Caco-2 (cell line): ENCODE measurements at regions of chr15 and their contacts with region 1.

Region 1: GRCh38 chr15:84658080-84658787 is at the start of gene NMB:
- DNase-seq: peak; percentile 89 to 92
- H3K4me3 ChIP-seq: peak within 1 kb of the TSS; percentile 60
- H3K4me3 Mint-ChIP-seq: peak within 1 kb of the TSS; percentile 77
- H3K27ac Mint-ChIP-seq: peak within 1 kb of the TSS; percentile 35
- H3K4me1 ChIP-seq: peaks cover 10% of the 10 kb centered on the region; the same call in 1 of the 2 replicates
- H3K4me1 Mint-ChIP-seq: peaks cover 6% of the 10 kb centered on the region
- H3K27me3 ChIP-seq: no peaks in the 10 kb centered on the region
- H3K27me3 Mint-ChIP-seq: no peaks in the 10 kb centered on the region
- CTCF ChIP-seq: peak; percentile 80 to 94
- total RNA-seq, gene NMB: 7.5 and 8.6 TPM in 2 replicates

Region 2: DNA sequence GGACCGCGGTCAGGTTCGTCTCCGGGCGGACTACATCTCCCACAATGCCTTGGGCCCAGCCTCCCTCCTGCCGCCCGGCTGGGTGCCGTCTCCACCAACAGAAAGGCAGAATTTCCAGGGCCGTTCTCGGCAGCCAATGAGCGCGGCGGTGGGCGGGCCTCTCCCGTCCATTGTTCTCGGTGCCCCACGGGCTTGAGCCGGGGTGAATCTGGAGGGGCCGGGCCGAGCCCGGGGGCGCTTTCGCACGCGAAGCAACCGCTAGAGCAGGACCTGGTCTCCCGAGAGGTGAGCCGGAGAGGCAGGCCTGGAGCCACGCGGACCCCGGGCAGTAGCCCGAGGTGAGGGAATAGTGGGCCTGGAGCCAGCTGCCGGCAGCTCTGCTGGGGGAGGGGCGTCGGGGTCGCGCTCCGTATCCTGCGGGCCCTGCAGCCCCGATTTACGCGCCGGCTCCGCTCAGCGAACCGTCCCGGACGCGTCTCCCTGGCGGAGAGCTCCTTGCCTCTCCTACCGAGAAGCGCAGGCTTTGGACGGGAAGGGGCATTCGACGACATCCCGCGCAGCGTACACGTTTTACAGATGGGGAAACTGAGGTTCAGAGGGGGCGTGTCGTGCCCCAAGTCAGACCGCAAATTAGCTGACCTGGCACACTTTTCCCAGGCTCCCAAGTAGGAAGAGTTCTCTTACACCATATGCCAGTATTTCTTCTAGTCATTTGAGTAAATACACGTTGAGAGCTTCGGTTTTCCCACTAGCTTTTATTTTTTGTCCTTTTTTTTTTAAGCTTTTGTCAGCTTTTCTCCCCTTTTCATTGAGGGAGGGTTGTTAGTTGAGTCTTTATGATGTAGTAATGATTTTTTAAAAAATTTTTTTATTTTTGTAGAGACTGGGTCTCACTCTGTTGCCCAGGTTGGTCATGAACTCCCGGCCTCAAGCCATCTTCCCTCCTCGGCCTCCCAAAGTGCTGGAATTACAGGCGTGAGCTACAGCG is 57.1 kb before region 1 on chr15 and contains the start of gene ZSCAN2:
- CTCF ChIA-PET with region 1: interaction called, 18 read pairs
- POLR2A ChIA-PET with region 1: no interaction called
- intact Hi-C with region 1: loop called (anchors 1 kb)
- DNase-seq: peak; percentile 95 to 97
- H3K4me3 ChIP-seq: peak within 1 kb of the TSS; percentile 67
- H3K4me3 Mint-ChIP-seq: peak within 1 kb of the TSS; percentile 96
- H3K27ac Mint-ChIP-seq: peak within 1 kb of the TSS; percentile 86
- H3K4me1 ChIP-seq: peaks cover 12% of the 10 kb centered on the region
- H3K4me1 Mint-ChIP-seq: peaks cover 19% of the 10 kb centered on the region
- H3K27me3 ChIP-seq: no peaks in the 10 kb centered on the region
- H3K27me3 Mint-ChIP-seq: peaks cover 3% of the 10 kb centered on the region
- CTCF ChIP-seq: no peak
- total RNA-seq, gene ZSCAN2: 12.7 and 12.9 TPM in 2 replicates

Region 3: GRCh38 chr15:84633311-84634227 is 24.7 kb before region 1 on chr15:
- CTCF ChIA-PET with region 1: interaction called, 7 read pairs
- POLR2A ChIA-PET with region 1: interaction called, 6 read pairs
- intact Hi-C with region 1: loop called (anchors 1 kb)
- DNase-seq: peak; percentile 65 to 72
- H3K4me3 ChIP-seq: peak overlapping the region; percentile 70
- H3K4me3 Mint-ChIP-seq: peak overlapping the region; percentile 91
- H3K27ac Mint-ChIP-seq: peak overlapping the region; percentile 74
- H3K4me1 ChIP-seq: 0 out of 2 replicates have a peak, but pooled peaks cover 7% of the 10 kb centered on the region
- H3K4me1 Mint-ChIP-seq: no peaks in the 10 kb centered on the region
- H3K27me3 ChIP-seq: no peaks in the 10 kb centered on the region
- H3K27me3 Mint-ChIP-seq: no peaks in the 10 kb centered on the region
- CTCF ChIP-seq: no peak

Region 4: GRCh38 chr15:84716036-84716799 is 58.0 kb after region 1 on chr15 and contains the start of gene SEC11A:
- CTCF ChIA-PET with region 1: no interaction called
- POLR2A ChIA-PET with region 1: interaction called, 3 read pairs
- intact Hi-C with region 1: loop called (anchors 10 kb)
- DNase-seq: peak; percentile 95 to 97
- H3K4me3 ChIP-seq: peak within 1 kb of the TSS; percentile 60
- H3K4me3 Mint-ChIP-seq: peak within 1 kb of the TSS; percentile 81
- H3K27ac Mint-ChIP-seq: peak within 1 kb of the TSS; percentile 87
- H3K4me1 ChIP-seq: peaks cover 5% of the 10 kb centered on the region
- H3K4me1 Mint-ChIP-seq: peaks cover 6% of the 10 kb centered on the region
- H3K27me3 ChIP-seq: no peaks in the 10 kb centered on the region
- H3K27me3 Mint-ChIP-seq: no peaks in the 10 kb centered on the region
- CTCF ChIP-seq: no peak
- total RNA-seq, gene SEC11A: 200 and 211 TPM in 2 replicates

Region 5: GRCh38 chr15:84734794-84735479 is 76.7 kb after region 1 on chr15:
- CTCF ChIA-PET with region 1: interaction called, 3 read pairs
- POLR2A ChIA-PET with region 1: interaction called, 10 read pairs
- intact Hi-C with region 1: no loop called
- DNase-seq: peak; percentile 95
- H3K4me3 ChIP-seq: no peak overlapping the region; the same call in 1 of the 2 replicates
- H3K4me3 Mint-ChIP-seq: peak overlapping the region; percentile 66
- H3K27ac Mint-ChIP-seq: peak overlapping the region; percentile 94
- H3K4me1 ChIP-seq: peaks cover 27% of the 10 kb centered on the region
- H3K4me1 Mint-ChIP-seq: peaks cover 22% of the 10 kb centered on the region
- H3K27me3 ChIP-seq: no peaks in the 10 kb centered on the region
- H3K27me3 Mint-ChIP-seq: no peaks in the 10 kb centered on the region
- CTCF ChIP-seq: no peak

Region 6: GRCh38 chr15:84748274-84749110 is 90.3 kb after region 1 on chr15 and contains the start of gene ZNF592:
- CTCF ChIA-PET with region 1: no interaction called
- POLR2A ChIA-PET with region 1: no interaction called
- intact Hi-C with region 1: loop called (anchors 2 kb)
- DNase-seq: peak; percentile 75 to 87
- H3K4me3 ChIP-seq: peak within 1 kb of the TSS; percentile 89
- H3K4me3 Mint-ChIP-seq: peak within 1 kb of the TSS; percentile 94
- H3K27ac Mint-ChIP-seq: peak within 1 kb of the TSS; percentile 97
- H3K4me1 ChIP-seq: peaks cover 39% of the 10 kb centered on the region
- H3K4me1 Mint-ChIP-seq: peaks cover 34% of the 10 kb centered on the region
- H3K27me3 ChIP-seq: no peaks in the 10 kb centered on the region
- H3K27me3 Mint-ChIP-seq: no peaks in the 10 kb centered on the region
- CTCF ChIP-seq: no peak
- total RNA-seq, gene ZNF592: 29.1 and 30.6 TPM in 2 replicates

Region 7: GRCh38 chr15:84818261-84819131 is 160.3 kb after region 1 on chr15:
- CTCF ChIA-PET with region 1: no interaction called
- POLR2A ChIA-PET with region 1: no interaction called
- intact Hi-C with region 1: loop called (anchors 5 kb)
- DNase-seq: peak in 1 of 2 experiments; percentile 26
- H3K4me3 ChIP-seq: no peak overlapping the region
- H3K4me3 Mint-ChIP-seq: peak overlapping the region; percentile 44
- H3K27ac Mint-ChIP-seq: peak overlapping the region; percentile 75
- H3K4me1 ChIP-seq: peaks cover 41% of the 10 kb centered on the region
- H3K4me1 Mint-ChIP-seq: peaks cover 33% of the 10 kb centered on the region
- H3K27me3 ChIP-seq: no peaks in the 10 kb centered on the region
- H3K27me3 Mint-ChIP-seq: no peaks in the 10 kb centered on the region
- CTCF ChIP-seq: no peak